Psoas muscle (tissue), 8 donors: ENCODE measurements at regions of chrX and their contacts with region 1.

Region 1: DNA sequence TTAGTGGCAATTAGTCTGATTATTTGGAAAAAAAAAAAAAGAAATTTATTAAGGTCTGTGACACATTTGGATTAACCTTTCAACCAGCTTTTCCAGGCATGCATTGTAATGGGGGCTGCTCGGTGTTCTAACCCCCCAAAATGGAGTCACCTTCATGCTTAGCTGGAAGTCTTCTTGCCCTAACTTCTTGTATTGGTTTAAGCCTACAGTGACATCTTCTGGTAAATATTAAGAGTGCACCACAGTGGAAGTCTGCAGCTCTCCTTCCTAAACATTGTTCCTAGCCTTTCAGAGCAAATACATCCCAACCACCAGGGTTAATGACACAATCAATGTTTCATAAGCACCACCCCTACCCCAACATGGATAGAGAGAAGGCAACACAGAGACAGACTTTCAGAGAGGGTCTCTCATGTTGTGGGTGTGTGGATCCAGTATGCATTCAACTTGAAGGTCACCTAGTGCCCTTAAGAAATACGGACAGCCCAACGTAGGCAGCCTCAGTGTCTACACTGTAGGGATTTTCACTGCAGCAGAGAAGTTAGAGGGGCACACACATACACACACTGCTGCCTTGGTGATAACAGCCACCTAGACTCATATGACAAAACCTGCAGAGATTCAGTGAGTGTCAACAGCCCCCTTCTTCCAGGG is 142.9 kb upstream of the MBNL3 start:
- DNase-seq: no peak
- ATAC-seq: peak in 1 of 4 donors; percentile 44
- H3K4me3 ChIP-seq: no peak overlapping the region
- H3K27ac ChIP-seq: no peak overlapping the region
- H3K4me1 ChIP-seq: no peaks in the 10 kb centered on the region
- H3K27me3 ChIP-seq: peaks cover 0 to 22% (median 0%) of the 10 kb centered on the region in 3 donors
- CTCF ChIP-seq: peak; percentile 56

Region 2: GRCh38 chrX:131841496-131842410 is 790.0 kb before region 1 on chrX:
- intact Hi-C with region 1: loop called (anchors 2 to 10 kb)
- DNase-seq: no peak
- ATAC-seq: peak; percentile 49 to 78 (median 63)
- H3K4me3 ChIP-seq: no peak overlapping the region
- H3K27ac ChIP-seq: no peak overlapping the region
- H3K4me1 ChIP-seq: no peaks in the 10 kb centered on the region
- H3K27me3 ChIP-seq: peaks cover 0 to 18% (median 0%) of the 10 kb centered on the region in 3 donors
- CTCF ChIP-seq: peak; percentile 89

Region 3: DNA sequence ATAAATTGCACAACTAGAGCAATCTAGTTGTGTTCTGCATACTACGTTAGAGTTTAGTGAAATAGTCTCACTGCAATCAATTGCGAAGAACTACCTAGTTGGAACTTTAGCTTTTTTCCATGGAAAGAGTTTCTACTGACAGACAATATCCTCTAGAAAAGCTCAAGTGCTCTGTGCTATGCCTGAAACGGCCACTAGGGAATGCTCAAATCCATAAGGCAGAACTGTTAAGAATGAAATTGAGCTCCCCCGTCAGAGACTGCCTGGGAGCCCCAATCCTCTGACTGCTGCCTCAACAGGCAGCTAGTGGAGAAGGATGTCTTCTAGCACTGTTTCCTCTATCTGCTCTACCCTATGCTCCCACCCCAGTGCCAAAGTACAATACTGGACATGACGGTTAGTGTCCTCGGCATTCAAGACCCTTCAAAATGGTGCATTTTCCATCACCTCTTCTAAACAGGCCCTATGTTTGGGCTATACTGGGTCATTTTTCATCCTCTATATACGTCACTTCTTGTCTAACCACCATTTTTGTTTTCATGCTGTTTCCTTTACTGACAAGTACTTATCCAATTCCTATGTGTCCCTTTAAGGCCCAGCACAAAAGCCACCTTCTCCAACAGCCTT is 539.2 kb before region 1 on chrX:
- intact Hi-C with region 1: loop called in 1 of 2 experiments (anchors 10 kb)
- DNase-seq: peak in 1 of 2 donors; percentile 21
- ATAC-seq: peak; percentile 56 to 83 (median 70)
- H3K4me3 ChIP-seq: no peak overlapping the region
- H3K27ac ChIP-seq: no peak overlapping the region
- H3K4me1 ChIP-seq: no peaks in the 10 kb centered on the region
- H3K27me3 ChIP-seq: peaks cover 0 to 7% (median 0%) of the 10 kb centered on the region in 3 donors
- CTCF ChIP-seq: peak; percentile 71

Region 4: GRCh38 chrX:132292793-132293192 is 338.9 kb before region 1 on chrX:
- intact Hi-C with region 1: loop called in 1 of 2 experiments (anchors 5 kb)
- DNase-seq: no peak
- ATAC-seq: peak; percentile 59 to 78 (median 62)
- H3K4me3 ChIP-seq: no peak overlapping the region
- H3K27ac ChIP-seq: no peak overlapping the region
- H3K4me1 ChIP-seq: no peaks in the 10 kb centered on the region
- H3K27me3 ChIP-seq: no peaks in the 10 kb centered on the region
- CTCF ChIP-seq: peak; percentile 68

Region 5: GRCh38 chrX:133171962-133172708 is 540.4 kb after region 1 on chrX:
- intact Hi-C with region 1: loop called in 1 of 2 experiments (anchors 10 kb)
- DNase-seq: no peak
- ATAC-seq: no peak
- H3K4me3 ChIP-seq: no peak overlapping the region
- H3K27ac ChIP-seq: no peak overlapping the region
- H3K4me1 ChIP-seq: no peaks in the 10 kb centered on the region
- H3K27me3 ChIP-seq: no peaks in the 10 kb centered on the region
- CTCF ChIP-seq: peak; percentile 43